ENCODE measurements at regions of chr20 and their contacts with region 1.

Region 1: DNA sequence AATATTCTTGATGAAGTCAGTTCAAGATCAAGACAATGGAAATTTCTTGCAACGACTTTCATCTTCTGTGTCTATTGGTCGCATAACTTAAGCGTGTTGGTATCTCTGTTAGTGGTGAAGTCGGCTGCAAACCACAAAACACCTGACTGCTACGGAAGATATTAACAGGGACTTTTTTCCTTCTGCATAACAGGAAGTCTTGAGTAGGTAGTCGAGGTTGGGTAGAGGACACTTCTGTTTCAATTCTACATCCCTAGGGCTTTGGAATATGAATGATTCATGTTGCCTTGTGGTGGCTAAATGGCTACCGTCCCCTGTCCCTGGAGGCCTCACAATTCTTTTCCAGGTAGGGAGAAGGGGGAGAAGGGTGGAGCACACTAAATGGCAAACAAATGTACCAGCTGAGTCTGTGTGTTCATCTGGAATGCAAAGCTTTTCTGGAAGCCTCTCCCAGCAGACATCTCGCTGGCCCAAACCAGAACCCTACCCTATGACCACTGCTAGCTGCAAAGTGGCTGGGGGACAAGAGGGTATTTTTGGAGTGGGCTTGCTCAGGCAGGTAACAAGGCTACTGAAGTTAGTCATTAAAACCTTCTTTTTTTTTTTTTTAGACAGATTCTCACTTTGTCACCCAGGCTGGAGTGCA is 34.6 kb upstream of the NKX2-2 start:
- DNase-seq: peak; percentile 71
- ATAC-seq: peak; percentile 88
- H3K4me3 Mint-ChIP-seq: peak overlapping the region; percentile 32
- H3K27ac Mint-ChIP-seq: peak overlapping the region; percentile 64
- H3K4me1 Mint-ChIP-seq: peaks cover 38% of the 10 kb centered on the region
- H3K27me3 Mint-ChIP-seq: no peaks in the 10 kb centered on the region

Region 2: GRCh38 chr20:21559305-21559704 is 10.8 kb after region 1 on chr20:
- CTCF ChIA-PET with region 1: interaction called, 4 read pairs
- POLR2A ChIA-PET with region 1: interaction called, 4 read pairs
- intact Hi-C with region 1: loop called in 1 of 2 experiments (anchors 1 kb)
- DNase-seq: peak; percentile 58
- ATAC-seq: peak; percentile 70
- H3K4me3 Mint-ChIP-seq: peak overlapping the region; percentile 41
- H3K27ac Mint-ChIP-seq: no peak overlapping the region
- H3K4me1 Mint-ChIP-seq: peaks cover 46% of the 10 kb centered on the region
- H3K27me3 Mint-ChIP-seq: peaks cover 11% of the 10 kb centered on the region

Measured in activated CD4-positive, alpha-beta T cell treated with anti-CD3 and anti-CD28 coated beads for 36 hours (primary cell).